Endothelial cell of umbilical vein (primary cell): ENCODE measurements at regions of chr11 and their contacts with region 1.

Region 1: DNA sequence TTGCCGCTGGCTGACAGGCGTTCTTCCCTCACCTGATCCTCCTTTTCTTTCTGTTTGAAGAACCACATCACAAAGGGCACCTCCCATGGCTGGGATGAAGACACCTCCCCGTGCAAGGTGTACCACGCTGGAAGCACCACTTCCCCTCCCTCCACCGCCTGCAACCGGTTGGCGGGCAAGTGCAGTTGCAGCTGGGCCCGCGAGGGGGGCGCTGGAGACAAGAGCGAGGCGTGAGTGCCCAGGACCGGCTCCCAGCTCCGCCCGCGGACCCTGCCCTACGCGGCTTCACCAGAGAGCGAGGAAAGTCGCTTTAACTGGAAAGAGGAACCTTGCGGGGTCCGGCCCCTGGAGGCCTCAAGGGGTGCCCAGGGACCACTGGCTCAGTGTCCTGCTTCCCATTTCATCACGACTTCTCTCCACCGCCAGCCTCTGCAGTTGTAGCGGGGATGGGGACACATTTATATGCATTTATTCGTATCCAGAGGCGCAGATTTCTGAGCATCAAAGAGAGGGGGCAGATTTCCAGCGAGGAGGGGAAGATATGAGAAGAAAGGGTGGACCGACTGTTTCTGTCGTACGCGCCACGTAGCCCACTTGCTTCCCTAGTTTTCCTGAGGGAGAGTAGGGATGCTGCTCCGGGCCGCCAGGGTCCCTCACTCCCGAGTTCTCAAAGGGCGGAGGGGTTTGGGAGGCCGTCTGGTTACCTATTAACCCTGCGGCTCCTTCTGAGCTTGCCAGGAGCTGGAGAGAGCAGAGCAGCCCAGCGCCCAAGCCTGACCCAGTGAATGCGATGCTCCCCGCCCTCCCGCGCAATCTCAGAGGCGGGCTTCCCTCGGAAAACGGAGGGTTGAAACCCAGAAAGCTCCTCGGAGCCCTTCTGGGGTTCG is 3.5 kb downstream of the ESAM start:
- DNase-seq: peak; percentile 81
- H3K4me3 ChIP-seq: peak overlapping the region; percentile 23 to 65 (median 36)
- H3K27ac ChIP-seq: peak overlapping the region; percentile 97
- H3K4me1 ChIP-seq: peaks cover 65% of the 10 kb centered on the region
- H3K27me3 ChIP-seq: no peaks in the 10 kb centered on the region
- CTCF ChIP-seq: peak; percentile 73 to 91
- POLR2A ChIP-seq: peak; percentile 42

Region 2: DNA sequence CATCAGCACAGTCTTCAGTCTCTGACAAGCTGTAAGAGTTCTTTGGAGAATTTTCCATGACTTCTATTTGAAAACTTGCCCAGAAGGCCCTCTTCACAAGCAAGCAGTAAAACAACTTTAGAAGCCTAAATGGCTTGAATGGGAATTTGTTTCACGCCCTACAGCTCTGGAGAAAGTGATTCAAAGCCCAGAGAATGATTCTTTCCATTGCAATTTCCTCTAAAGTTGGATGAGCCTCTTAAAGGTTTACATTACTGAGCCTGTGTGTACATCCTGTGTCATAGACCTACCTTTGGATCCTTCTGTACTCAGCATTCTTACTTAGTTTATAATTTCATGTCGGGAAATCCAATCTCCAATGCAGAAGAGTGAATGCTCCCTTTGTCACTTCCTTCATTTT is 353.0 kb before region 1 on chr11:
- CTCF ChIA-PET with region 1: no interaction called
- POLR2A ChIA-PET with region 1: no interaction called
- dilution Hi-C with region 1: no loop called
- intact Hi-C with region 1: no loop called
- DNase-seq: no peak
- H3K4me3 ChIP-seq: no peak overlapping the region
- H3K27ac ChIP-seq: no peak overlapping the region
- H3K4me1 ChIP-seq: no peaks in the 10 kb centered on the region
- H3K27me3 ChIP-seq: peaks cover 6 to 20% of the 10 kb centered on the region in 2 experiments
- CTCF ChIP-seq: no peak
- POLR2A ChIP-seq: no peak

Region 3: DNA sequence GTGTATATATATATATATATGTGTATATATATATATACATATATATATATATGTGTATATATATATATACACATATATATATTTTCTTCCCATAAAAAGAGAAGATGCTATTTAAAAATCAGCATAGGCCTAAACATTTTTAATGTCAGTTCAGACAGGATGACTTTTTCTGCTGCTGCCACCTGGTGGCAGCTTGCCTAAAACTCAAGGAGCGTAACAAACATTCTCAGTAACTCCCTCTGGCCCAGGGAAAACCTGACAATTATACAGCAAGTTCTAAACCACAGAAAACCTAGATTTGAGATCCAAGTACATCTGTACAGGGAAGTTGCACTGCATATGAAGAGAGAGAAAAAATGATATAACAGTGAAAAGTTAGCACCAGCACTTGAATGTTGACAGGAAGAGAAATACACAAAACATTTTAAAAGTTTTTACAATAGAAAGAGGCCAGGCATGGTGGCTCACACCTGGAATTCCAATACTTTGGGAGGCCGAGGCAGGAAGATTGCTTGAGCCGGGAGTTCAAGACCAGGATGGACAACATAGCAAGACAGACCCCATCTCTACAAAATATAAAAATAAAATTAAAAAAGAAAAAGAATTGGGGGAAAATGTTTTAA is 172.2 kb before region 1 on chr11:
- CTCF ChIA-PET with region 1: no interaction called
- POLR2A ChIA-PET with region 1: no interaction called
- dilution Hi-C with region 1: no loop called
- intact Hi-C with region 1: no loop called
- DNase-seq: peak; percentile 59
- H3K4me3 ChIP-seq: no peak overlapping the region
- H3K27ac ChIP-seq: no peak overlapping the region
- H3K4me1 ChIP-seq: no peaks in the 10 kb centered on the region
- H3K27me3 ChIP-seq: peaks cover 7 to 16% of the 10 kb centered on the region in 2 experiments
- CTCF ChIP-seq: peak; percentile 52 to 57
- POLR2A ChIP-seq: no peak

Region 4: GRCh38 chr11:124724979-124725718 is 33.4 kb before region 1 on chr11:
- CTCF ChIA-PET with region 1: interaction called, 6 read pairs
- POLR2A ChIA-PET with region 1: no interaction called
- dilution Hi-C with region 1: no loop called
- intact Hi-C with region 1: loop called (anchors 1 kb)
- DNase-seq: no peak
- H3K4me3 ChIP-seq: peak overlapping the region in 1 of 3 experiments; percentile 9
- H3K27ac ChIP-seq: peak overlapping the region; percentile 77
- H3K4me1 ChIP-seq: peaks cover 24% of the 10 kb centered on the region
- H3K27me3 ChIP-seq: no peaks in the 10 kb centered on the region
- CTCF ChIP-seq: no peak
- POLR2A ChIP-seq: no peak

Region 5: DNA sequence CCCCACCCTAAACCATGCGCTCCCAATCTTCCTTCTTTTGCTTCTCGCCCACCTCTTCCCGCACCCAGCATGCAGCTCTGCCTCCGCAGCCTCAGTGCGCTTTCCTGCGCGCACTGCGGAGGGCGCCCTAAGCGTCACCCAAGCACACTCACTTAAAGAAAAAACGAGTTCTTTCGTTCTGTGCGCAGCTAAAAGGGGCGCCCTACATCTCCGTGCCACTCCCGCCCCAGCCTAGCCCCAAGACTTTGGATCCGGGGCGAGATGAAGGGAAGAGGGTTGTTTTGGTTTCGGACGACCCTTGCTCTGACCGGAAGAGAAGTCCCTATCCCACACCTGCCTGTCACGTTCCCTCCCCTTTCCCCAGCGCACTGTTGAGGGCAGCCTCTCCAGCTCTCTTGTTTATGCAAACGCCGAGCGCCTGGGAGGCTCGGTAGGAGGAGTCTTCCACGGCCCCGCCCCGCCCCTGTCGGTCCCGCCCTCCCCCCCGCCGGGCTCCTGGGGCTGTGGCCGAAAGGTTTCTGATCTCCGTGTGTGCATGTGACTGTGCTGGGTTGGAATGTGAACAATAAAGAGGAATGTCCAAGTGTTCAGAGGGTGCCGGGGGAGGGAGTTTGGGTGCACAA is 11.8 kb before region 1 on chr11:
- CTCF ChIA-PET with region 1: interaction called, 301 read pairs
- POLR2A ChIA-PET with region 1: interaction called, 67 read pairs
- dilution Hi-C with region 1: no loop called
- intact Hi-C with region 1: loop called (anchors 1 kb)
- DNase-seq: peak; percentile 93
- H3K4me3 ChIP-seq: peak overlapping the region in 2 of 3 experiments; percentile 36 to 46
- H3K27ac ChIP-seq: peak overlapping the region; percentile 70
- H3K4me1 ChIP-seq: peaks cover 40% of the 10 kb centered on the region
- H3K27me3 ChIP-seq: no peaks in the 10 kb centered on the region
- CTCF ChIP-seq: peak; percentile 62 to 79
- POLR2A ChIP-seq: peak; percentile 72

Region 6: DNA sequence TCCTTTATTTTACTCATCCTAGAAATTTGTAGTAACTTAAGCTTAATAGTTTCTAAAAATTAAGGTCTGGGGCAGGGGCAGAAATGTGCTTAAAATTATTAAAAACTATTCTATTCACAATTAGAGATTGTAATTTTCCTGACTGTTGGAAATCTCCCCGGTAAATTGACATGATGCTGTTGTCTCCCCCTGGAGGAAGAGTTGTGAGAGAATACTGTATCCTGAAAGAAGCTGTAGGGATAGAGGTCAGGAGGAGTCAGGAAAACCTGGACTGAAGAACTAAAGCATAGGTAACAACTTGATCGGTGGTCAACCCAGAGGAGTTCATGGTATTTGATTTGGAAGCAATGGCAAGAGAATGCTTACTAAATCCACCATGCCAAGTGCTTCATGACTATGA is 19.7 kb after region 1 on chr11:
- CTCF ChIA-PET with region 1: interaction called, 45 read pairs
- POLR2A ChIA-PET with region 1: interaction called, 10 read pairs
- dilution Hi-C with region 1: no loop called
- intact Hi-C with region 1: loop called (anchors 2 kb)
- DNase-seq: no peak
- H3K4me3 ChIP-seq: no peak overlapping the region
- H3K27ac ChIP-seq: no peak overlapping the region
- H3K4me1 ChIP-seq: no peaks in the 10 kb centered on the region
- H3K27me3 ChIP-seq: no peaks in the 10 kb centered on the region
- CTCF ChIP-seq: peak in 1 of 2 donors; percentile 26
- POLR2A ChIP-seq: no peak